K562 (cell line): ENCODE measurements at regions of chr2 and their contacts with region 1.

Region 1: DNA sequence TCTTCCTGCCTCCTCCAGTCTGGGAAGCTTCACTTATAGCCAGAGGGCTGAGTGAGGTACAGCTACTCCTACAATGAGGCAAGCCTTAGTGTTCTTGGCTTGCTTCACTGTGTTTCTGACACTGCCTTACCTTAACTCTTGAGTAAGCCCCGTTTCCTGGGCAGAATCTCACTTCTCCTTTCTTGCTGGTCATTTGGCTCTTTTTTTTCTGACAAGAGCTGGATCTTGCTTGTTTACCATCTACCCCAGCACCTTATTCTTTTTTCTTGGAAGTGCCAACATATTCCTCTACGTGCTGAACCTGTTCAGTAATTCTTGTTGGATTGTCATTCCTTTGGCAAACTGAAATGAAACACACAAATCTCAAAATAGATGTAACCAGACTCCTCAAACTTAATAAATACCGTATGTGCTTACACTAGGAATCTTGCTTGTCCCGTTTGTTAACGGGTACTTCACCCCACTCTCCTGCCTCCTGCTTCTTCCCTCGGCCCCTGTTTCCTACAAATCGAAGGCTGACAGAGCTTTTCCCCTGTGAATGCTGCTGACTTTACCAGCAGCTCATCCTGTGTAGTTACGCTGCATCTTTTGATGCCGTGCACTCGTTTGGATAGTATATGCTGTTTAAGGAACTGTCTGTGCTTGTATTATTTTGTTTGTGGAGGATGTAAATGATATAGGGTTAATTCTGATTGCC is 132.2 kb downstream of the FMNL2 start:
- DNase-seq: no peak
- ATAC-seq: no peak
- H3K4me3 ChIP-seq: no peak overlapping the region
- H3K27ac ChIP-seq: no peak overlapping the region
- H3K4me1 ChIP-seq: no peaks in the 10 kb centered on the region
- H3K27me3 ChIP-seq: peaks cover 12 to 13% of the 10 kb centered on the region in 2 experiments
- CTCF ChIP-seq: no peak
- EP300 ChIP-seq: no peak
- POLR2A ChIP-seq: no peak
- RAD21 ChIP-seq: no peak

Region 2: GRCh38 chr2:152477347-152478092 is 10.4 kb after region 1 on chr2:
- CTCF ChIA-PET with region 1: no interaction called
- POLR2A ChIA-PET with region 1: interaction called, 10 read pairs
- in situ Hi-C with region 1: no loop called
- intact Hi-C with region 1: no loop called
- DNase-seq: no peak
- ATAC-seq: no peak
- H3K4me3 ChIP-seq: no peak overlapping the region
- H3K27ac ChIP-seq: no peak overlapping the region
- H3K4me1 ChIP-seq: no peaks in the 10 kb centered on the region
- H3K27me3 ChIP-seq: peaks cover 0 to 4% of the 10 kb centered on the region in 2 experiments; a peak in 1 of 5 replicates
- CTCF ChIP-seq: no peak
- EP300 ChIP-seq: no peak
- POLR2A ChIP-seq: no peak
- RAD21 ChIP-seq: no peak